Panc1 (cell line): ENCODE measurements at regions of chr17 and their contacts with region 1.

Region 1: DNA sequence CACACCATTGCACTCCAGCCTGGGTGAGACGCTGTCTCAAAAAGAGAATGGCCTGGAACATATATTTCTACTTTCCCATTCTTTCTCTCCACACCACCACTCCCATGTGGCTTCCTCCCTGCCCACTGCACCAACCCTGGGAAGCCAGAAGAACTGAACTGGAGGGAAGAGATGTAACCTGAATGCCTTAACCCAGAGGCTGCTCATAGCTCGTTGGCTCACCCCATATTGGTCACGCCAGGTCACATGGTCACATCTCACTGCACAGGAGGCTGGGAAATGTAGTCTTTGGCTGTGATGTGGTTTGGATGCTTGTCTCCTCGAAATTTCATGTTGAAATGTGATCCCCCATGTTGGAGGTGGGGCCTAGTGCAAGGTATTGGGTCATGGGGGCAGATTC is 5.9 kb upstream of the DNAH17 start:
- DNase-seq: no peak
- ATAC-seq: peak; percentile 60; the same call in 1 of the 2 replicates
- H3K4me3 ChIP-seq: no peak overlapping the region
- H3K27ac ChIP-seq: no peak overlapping the region
- H3K4me1 ChIP-seq: no peaks in the 10 kb centered on the region
- H3K27me3 ChIP-seq: no peaks in the 10 kb centered on the region
- CTCF ChIP-seq: no peak

Region 2: GRCh38 chr17:78324391-78325075 is 258.6 kb before region 1 on chr17:
- CTCF ChIA-PET with region 1: no interaction called
- POLR2A ChIA-PET with region 1: no interaction called
- in situ Hi-C with region 1: no loop called
- intact Hi-C with region 1: no loop called
- DNase-seq: no peak
- ATAC-seq: peak; percentile 44
- H3K4me3 ChIP-seq: no peak overlapping the region
- H3K27ac ChIP-seq: peak overlapping the region; percentile 54
- H3K4me1 ChIP-seq: peaks cover 27% of the 10 kb centered on the region
- H3K27me3 ChIP-seq: no peaks in the 10 kb centered on the region
- CTCF ChIP-seq: no peak

Region 3: DNA sequence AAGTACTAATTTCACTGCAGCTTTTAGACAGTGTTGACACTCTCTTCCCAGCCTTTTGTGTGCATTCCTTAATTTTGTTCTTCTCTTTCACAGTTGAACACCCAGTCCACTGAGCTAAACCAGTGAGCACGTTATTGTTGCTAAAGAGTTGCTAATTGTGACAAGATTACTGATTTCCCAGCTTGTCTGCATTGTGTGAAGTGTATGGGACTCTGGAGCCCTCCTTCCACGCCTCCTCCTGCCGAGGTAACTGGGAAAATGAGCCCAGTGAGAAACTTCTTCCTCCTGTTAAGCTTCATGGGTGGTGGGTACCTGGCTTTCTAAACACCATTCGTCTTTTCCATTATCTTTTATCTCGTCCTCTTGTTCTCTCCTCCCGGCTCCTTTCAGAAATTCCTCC is 23.9 kb after region 1 on chr17:
- CTCF ChIA-PET with region 1: no interaction called
- POLR2A ChIA-PET with region 1: no interaction called
- in situ Hi-C with region 1: no loop called
- intact Hi-C with region 1: no loop called
- DNase-seq: no peak
- ATAC-seq: no peak
- H3K4me3 ChIP-seq: no peak overlapping the region
- H3K27ac ChIP-seq: no peak overlapping the region
- H3K4me1 ChIP-seq: no peaks in the 10 kb centered on the region
- H3K27me3 ChIP-seq: no peaks in the 10 kb centered on the region
- CTCF ChIP-seq: no peak

Region 4: GRCh38 chr17:78617511-78618061 is 34.5 kb after region 1 on chr17:
- CTCF ChIA-PET with region 1: interaction called, 12 read pairs
- POLR2A ChIA-PET with region 1: interaction called, 12 read pairs
- in situ Hi-C with region 1: no loop called
- intact Hi-C with region 1: no loop called
- DNase-seq: no peak
- ATAC-seq: no peak
- H3K4me3 ChIP-seq: no peak overlapping the region
- H3K27ac ChIP-seq: no peak overlapping the region
- H3K4me1 ChIP-seq: no peaks in the 10 kb centered on the region
- H3K27me3 ChIP-seq: no peaks in the 10 kb centered on the region
- CTCF ChIP-seq: no peak